IMR-90 (cell line): ENCODE measurements at regions of chr9 and their contacts with region 1.

Region 1: GRCh38 chr9:22008736-22009562 is at the start of gene CDKN2B:
- DNase-seq: peak; percentile 94
- ATAC-seq: peak; percentile 98
- H3K4me3 ChIP-seq: peak within 1 kb of the TSS; percentile 65
- H3K27ac ChIP-seq: peak within 1 kb of the TSS; percentile 70
- H3K4me1 ChIP-seq: peaks cover 8% of the 10 kb centered on the region; the same call in 1 of the 2 replicates
- H3K27me3 ChIP-seq: no peaks in the 10 kb centered on the region
- CTCF ChIP-seq: peak; percentile 85
- POLR2A ChIP-seq: peak; percentile 97
- RAD21 ChIP-seq: peak; percentile 67
- total RNA-seq, gene CDKN2B: 3.6 and 5.6 TPM in 2 replicates

Region 2: DNA sequence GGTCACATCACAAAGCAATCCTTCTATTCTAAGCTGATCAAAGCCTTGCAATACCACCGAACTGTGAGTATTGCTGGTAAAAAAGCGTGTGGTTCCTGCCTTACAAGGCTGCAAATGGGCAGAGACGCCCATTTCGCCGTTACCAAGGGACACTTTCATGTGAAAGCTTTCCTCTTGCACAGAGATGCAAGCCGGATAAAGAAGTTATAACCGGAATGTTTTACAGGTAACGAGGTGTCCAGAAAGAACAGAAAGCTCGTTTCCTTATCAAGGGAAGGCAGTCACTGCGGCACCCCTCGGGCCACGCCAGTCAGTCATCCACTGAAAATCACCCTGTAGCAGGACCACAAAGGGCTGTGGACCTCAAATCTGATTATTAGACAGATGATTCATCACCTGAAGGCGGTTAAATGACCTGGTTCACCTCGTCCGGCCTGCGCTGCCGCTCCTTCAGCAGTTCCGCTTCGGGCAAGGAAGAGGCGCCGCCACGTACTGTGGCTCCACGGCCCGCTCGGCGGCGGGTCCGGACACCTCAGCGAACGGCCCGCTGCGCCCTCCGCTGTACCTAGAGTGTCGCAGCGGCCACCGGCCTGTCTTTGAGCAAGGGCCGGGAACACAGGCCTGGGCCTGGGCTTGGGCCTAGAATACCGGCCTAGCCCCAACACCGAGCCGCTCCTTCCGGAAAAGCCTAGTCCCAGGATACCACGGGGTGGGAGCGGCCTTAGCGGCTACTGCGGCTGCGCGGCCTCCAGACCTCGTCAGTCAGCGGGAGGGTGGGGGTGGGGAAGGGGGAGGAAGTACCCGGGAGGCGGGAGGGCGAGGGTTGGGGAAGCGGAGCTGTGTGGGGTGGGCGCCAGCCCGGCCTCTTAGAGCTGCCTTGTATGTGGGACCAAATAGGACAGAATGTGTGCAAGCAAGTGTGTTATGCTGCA is 674.0 kb before region 1 on chr9 and contains the start of gene KLHL9:
- CTCF ChIA-PET with region 1: no interaction called
- POLR2A ChIA-PET with region 1: no interaction called
- dilution Hi-C with region 1: no loop called
- in situ Hi-C with region 1: loop called (anchors 25 kb)
- intact Hi-C with region 1: no loop called
- DNase-seq: peak; percentile 88
- ATAC-seq: peak; percentile 98
- H3K4me3 ChIP-seq: peak within 1 kb of the TSS; percentile 94
- H3K27ac ChIP-seq: peak within 1 kb of the TSS; percentile 96
- H3K4me1 ChIP-seq: peaks cover 7% of the 10 kb centered on the region
- H3K27me3 ChIP-seq: peaks cover 4% of the 10 kb centered on the region; the same call in 1 of the 2 replicates
- CTCF ChIP-seq: no peak
- POLR2A ChIP-seq: peak; percentile 79; the same call in 1 of the 2 replicates
- RAD21 ChIP-seq: no peak
- total RNA-seq, gene KLHL9: 46.4 and 68.6 TPM in 2 replicates

Region 3: DNA sequence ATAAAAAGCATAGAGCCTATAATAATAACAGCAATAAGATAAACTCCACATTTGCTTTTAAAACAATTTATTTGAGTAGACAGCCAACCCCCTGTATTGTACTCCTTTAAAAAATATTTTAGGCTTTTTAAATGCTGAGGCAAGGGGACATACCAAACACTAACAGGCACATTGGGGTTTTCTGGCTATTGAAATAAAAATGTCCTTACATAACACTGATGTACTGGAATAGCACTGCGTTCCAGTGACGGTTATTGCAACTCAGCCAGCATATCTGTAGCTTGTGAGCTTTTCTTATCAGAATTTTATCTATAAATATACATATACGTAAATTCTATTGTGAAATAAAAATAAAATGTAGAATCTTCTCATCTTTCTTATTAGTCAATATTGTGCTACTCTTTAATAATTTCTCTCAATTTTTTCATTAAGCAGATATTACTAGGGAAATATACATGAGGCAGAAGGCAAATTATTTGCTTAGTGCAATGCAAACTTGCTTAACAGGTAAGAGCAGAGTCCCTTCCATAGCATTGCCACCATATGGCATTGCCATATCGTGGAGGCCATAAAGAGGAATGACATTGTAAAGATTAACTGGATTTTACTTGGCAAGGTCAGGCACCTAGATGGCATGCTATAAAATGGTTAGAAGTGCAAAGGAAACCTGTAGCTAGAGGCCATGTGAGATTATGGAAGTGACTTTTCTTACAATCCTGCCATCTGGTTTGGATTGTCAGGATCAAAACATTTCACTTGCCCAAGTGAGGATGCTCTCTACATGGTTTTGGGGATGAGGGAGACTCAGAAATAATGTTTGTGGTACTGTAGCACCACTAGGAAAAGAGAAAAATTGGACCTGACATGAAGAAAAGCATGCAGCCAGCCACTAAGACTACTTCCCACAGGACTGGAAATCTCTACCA is 95.0 kb after region 1 on chr9:
- CTCF ChIA-PET with region 1: interaction called, 7 read pairs
- POLR2A ChIA-PET with region 1: interaction called, 3 read pairs
- dilution Hi-C with region 1: no loop called
- in situ Hi-C with region 1: no loop called
- intact Hi-C with region 1: loop called (anchors 5 kb)
- DNase-seq: peak; percentile 75
- ATAC-seq: peak; percentile 45
- H3K4me3 ChIP-seq: no peak overlapping the region
- H3K27ac ChIP-seq: peak overlapping the region; percentile 72; the same call in 1 of the 2 replicates
- H3K4me1 ChIP-seq: peaks cover 21% of the 10 kb centered on the region
- H3K27me3 ChIP-seq: no peaks in the 10 kb centered on the region
- CTCF ChIP-seq: no peak
- POLR2A ChIP-seq: no peak
- RAD21 ChIP-seq: no peak

Region 4: DNA sequence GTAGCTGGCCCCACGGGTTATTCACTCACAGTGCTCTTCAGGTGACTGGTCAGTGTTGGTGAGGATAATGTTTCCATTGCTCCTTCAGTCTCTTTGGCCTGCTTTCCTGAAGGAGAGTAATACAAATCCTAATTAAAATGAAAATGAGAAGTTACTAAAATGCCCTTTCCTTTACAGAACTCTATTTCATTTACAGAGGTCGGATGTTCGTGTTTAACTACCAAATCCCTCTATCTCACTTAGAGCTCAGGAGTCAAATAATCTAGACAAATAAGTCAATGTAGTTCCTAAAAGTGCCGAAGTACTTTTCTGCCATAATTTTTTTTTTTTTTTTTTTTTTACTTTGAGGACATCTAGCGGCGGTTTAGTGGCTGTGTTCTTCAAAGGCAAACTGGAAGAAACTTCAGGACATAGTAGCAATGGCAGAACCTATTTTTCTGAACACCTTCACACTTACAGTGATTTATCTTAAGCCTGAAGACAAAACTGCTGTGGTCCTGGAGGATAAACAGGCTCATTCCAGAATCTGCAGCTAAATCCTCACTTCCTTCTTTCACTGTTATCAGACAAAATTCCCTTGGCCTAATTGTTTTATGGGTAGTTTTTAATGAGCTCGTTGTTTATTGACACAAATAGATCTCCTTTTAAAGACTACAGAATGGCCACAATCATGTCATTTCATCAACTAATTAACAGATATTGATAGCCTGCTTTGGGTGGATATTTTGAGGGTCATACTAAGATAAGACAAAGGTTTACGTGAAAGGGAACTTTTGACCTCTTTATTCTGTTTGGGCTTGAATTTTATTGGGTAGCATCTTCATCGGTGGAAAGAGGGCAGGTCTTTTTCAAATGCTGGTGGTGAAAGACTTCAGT is 230.1 kb after region 1 on chr9:
- CTCF ChIA-PET with region 1: interaction called, 17 read pairs
- POLR2A ChIA-PET with region 1: interaction called, 3 read pairs
- dilution Hi-C with region 1: no loop called
- in situ Hi-C with region 1: no loop called
- intact Hi-C with region 1: loop called (anchors 1 kb)
- DNase-seq: peak; percentile 63
- ATAC-seq: peak; percentile 40
- H3K4me3 ChIP-seq: no peak overlapping the region
- H3K27ac ChIP-seq: peak overlapping the region; percentile 7; the same call in 1 of the 2 replicates
- H3K4me1 ChIP-seq: peaks cover 8% of the 10 kb centered on the region
- H3K27me3 ChIP-seq: no peaks in the 10 kb centered on the region
- CTCF ChIP-seq: peak; percentile 62
- POLR2A ChIP-seq: no peak
- RAD21 ChIP-seq: peak; percentile 51

Region 5: DNA sequence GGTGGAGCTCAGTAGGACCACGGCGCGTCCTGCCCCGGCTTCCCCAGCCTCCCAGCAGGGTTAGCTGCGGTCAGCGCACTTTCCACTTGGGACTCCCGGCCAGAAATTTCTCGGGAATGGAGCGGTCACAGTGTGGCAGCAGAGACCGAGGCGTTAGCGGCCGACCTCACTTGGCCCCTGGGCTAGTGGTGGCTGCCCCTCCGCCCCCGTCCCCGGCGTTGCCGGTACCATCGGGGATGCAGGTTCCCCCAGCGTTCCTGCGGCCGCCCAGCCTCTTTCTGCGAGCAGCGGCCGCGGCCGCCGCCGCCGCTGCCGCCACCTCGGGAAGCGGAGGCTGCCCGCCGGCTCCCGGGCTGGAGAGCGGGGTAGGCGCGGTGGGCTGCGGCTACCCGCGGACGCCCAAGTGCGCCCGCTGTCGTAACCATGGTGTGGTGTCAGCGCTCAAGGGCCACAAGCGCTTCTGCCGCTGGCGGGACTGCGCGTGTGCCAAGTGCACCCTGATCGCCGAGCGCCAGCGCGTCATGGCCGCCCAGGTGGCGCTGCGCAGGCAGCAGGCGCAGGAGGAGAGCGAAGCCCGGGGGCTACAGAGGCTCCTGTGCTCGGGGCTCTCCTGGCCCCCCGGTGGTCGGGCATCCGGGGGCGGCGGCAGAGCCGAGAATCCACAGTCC is 438.1 kb after region 1 on chr9:
- CTCF ChIA-PET with region 1: no interaction called
- POLR2A ChIA-PET with region 1: no interaction called
- dilution Hi-C with region 1: no loop called
- in situ Hi-C with region 1: no loop called
- intact Hi-C with region 1: loop called (anchors 5 kb)
- DNase-seq: peak; percentile 20
- ATAC-seq: peak; percentile 75
- H3K4me3 ChIP-seq: peak overlapping the region; percentile 69
- H3K27ac ChIP-seq: no peak overlapping the region
- H3K4me1 ChIP-seq: no peaks in the 10 kb centered on the region
- H3K27me3 ChIP-seq: peaks cover 12% of the 10 kb centered on the region
- CTCF ChIP-seq: 0 out of 2 replicates have a peak, but pooled peaks have one; percentile 8
- POLR2A ChIP-seq: no peak
- RAD21 ChIP-seq: no peak